GM23248 (cell line): ENCODE measurements at regions of chr10 and their contacts with region 1.

Region 1: GRCh38 chr10:74262856-74263255 is 111.8 kb downstream of the ADK start:
- DNase-seq: no peak
- H3K4me3 ChIP-seq: no peak overlapping the region
- H3K27ac ChIP-seq: no peak overlapping the region
- H3K4me1 ChIP-seq: no peaks in the 10 kb centered on the region
- H3K27me3 ChIP-seq: no peaks in the 10 kb centered on the region

Region 2: DNA sequence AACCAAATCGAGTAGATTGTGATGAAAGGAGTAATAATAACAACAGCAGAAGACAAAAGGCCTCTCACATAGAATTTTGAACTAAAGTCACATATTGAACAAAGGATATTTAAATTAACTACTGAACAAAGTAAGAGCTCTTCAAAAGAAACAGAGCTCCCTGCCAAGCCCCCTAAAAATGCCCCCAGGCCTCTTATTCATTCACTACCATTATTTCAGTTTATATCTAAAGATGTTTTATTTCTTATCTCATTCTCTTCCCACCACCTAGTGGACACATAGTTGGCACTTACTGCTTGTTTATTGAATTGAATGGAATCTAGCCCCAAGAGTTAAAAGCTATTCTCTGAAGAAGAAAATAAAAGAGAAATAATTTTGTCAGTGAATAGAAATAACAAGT is 227.6 kb before region 1 on chr10:
- in situ Hi-C with region 1: no loop called
- DNase-seq: no peak
- H3K4me3 ChIP-seq: no peak overlapping the region
- H3K27ac ChIP-seq: no peak overlapping the region
- H3K4me1 ChIP-seq: peaks cover 47% of the 10 kb centered on the region
- H3K27me3 ChIP-seq: no peaks in the 10 kb centered on the region

Region 3: GRCh38 chr10:74151056-74151878 is 111.6 kb before region 1 on chr10 and contains the start of gene ADK:
- in situ Hi-C with region 1: no loop called
- DNase-seq: peak; percentile 98
- H3K4me3 ChIP-seq: peak within 1 kb of the TSS; percentile 97
- H3K27ac ChIP-seq: peak within 1 kb of the TSS; percentile 79
- H3K4me1 ChIP-seq: peaks cover 23% of the 10 kb centered on the region; the same call in 1 of the 2 replicates
- H3K27me3 ChIP-seq: no peaks in the 10 kb centered on the region
- total RNA-seq, gene ADK: 29.3 and 43.7 TPM in 2 replicates

Region 4: GRCh38 chr10:74612195-74612594 is 349.3 kb after region 1 on chr10:
- in situ Hi-C with region 1: no loop called
- DNase-seq: peak; percentile 39
- H3K4me3 ChIP-seq: no peak overlapping the region
- H3K27ac ChIP-seq: no peak overlapping the region
- H3K4me1 ChIP-seq: no peaks in the 10 kb centered on the region
- H3K27me3 ChIP-seq: no peaks in the 10 kb centered on the region

Region 5: DNA sequence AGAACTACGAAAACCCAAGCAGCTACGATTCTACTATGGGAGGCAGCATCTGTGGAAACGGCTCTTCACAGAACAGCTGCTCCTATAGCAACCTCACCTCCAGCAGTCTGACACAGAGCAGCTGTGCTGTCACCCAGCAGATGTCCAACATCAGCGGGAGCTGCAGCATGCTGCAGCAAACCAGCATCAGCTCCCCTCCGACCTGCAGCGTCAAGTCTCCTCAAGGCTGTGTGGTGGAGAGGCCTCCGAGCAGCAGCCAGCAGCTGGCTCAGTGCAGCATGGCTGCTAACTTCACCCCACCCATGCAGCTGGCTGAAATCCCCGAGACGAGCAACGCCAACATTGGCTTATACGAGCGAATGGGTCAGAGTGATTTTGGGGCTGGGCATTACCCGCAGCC is 767.0 kb after region 1 on chr10:
- in situ Hi-C with region 1: loop called (anchors 10 kb)
- DNase-seq: no peak
- H3K4me3 ChIP-seq: no peak overlapping the region
- H3K27ac ChIP-seq: no peak overlapping the region
- H3K4me1 ChIP-seq: no peaks in the 10 kb centered on the region
- H3K27me3 ChIP-seq: no peaks in the 10 kb centered on the region

Region 6: DNA sequence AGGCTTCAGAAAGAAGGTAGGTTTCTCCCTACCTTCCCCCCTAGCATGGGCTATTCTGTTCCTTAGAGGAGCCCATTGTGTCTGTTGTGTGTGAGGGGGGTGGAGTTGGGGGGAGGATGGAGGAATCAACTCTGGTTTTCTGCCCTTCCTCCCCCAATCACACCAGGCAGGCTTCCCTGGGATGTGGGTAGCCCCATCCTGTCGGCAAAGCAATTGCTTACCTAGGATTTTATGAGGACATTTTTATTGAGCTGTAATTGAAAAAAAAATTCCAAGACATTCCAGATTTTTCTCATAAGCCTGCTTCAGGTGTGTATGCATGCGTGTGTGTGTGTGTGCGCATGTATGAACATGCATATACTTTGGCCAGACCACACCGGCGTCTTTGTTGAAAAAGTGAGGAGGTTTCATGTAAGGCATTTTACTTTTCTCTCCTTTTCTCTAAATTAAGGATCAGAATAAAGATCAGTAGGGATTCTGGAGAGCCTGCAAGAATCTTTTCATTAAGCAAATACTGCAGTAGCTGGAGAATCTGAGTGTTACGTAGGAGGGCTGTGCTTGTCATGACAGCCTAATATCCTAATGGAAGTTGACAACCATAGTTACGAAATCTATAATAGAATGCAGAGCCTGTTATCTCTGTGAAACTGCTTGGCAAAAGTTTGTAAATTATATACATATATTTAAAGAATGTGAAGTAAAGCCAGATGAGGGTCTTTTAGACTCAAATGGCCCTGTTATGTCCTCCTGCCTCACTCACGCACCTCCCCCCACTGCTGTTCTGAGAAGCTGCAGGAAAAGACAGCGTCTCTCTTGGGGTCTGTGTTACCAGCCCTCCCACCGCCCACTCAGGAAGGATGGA is 821.3 kb after region 1 on chr10:
- in situ Hi-C with region 1: loop called (anchors 10 kb)
- DNase-seq: peak; percentile 43
- H3K4me3 ChIP-seq: no peak overlapping the region
- H3K27ac ChIP-seq: no peak overlapping the region
- H3K4me1 ChIP-seq: no peaks in the 10 kb centered on the region
- H3K27me3 ChIP-seq: no peaks in the 10 kb centered on the region; the same call in 1 of the 2 replicates